PC-3 (cell line): ENCODE measurements at regions of chr4 and their contacts with region 1.

Region 1: GRCh38 chr4:140901736-140902336 is 145.7 kb upstream of the TBC1D9 start:
- DNase-seq: no peak
- ATAC-seq: no peak
- H3K4me3 ChIP-seq: no peak overlapping the region
- H3K27ac ChIP-seq: no peak overlapping the region
- H3K4me1 ChIP-seq: no peaks in the 10 kb centered on the region
- H3K27me3 ChIP-seq: peaks cover 52% of the 10 kb centered on the region
- CTCF ChIP-seq: no peak

Region 2: DNA sequence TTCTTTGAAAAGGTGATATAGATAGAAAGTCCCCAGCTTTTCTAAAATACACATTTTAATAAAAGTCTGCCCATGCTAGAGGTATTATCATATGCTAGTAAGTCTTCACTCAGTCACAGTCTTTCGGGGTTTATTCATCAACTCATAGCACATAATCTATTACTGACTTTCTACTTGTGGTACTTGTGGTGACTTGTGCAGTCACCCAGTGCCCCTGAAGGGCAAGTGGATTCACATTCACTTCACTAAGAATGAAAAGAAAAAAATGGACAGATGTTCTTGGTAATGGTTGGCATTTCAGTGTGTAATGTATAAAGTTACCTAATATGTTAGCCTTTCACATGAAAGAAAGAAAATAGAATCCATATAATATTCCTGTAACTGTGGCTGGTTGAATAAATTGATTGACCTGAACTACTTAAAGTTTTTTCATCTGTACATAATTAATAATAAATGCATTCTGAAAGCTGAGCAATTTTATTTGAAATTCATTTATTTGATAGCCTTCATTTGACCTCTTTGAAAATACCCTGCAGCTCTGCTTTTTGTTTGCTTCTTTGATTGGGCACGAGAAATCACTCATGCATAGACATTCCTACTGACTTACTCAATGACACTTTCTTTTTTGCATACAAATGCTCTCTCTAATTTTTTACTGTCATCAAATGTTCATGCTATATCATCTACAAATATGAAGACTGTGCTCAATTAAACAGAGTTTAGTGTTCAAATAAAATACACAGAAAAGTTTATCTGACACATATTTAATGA is 279.3 kb after region 1 on chr4:
- CTCF ChIA-PET with region 1: interaction called, 13 read pairs
- POLR2A ChIA-PET with region 1: no interaction called
- intact Hi-C with region 1: no loop called
- DNase-seq: no peak
- ATAC-seq: no peak
- H3K4me3 ChIP-seq: no peak overlapping the region
- H3K27ac ChIP-seq: no peak overlapping the region
- H3K4me1 ChIP-seq: no peaks in the 10 kb centered on the region
- H3K27me3 ChIP-seq: peaks cover 29% of the 10 kb centered on the region
- CTCF ChIP-seq: no peak

Region 3: GRCh38 chr4:141248029-141248428 is 346.2 kb after region 1 on chr4:
- CTCF ChIA-PET with region 1: no interaction called
- POLR2A ChIA-PET with region 1: no interaction called
- intact Hi-C with region 1: no loop called
- DNase-seq: no peak
- ATAC-seq: no peak
- H3K4me3 ChIP-seq: no peak overlapping the region
- H3K27ac ChIP-seq: no peak overlapping the region
- H3K4me1 ChIP-seq: no peaks in the 10 kb centered on the region
- H3K27me3 ChIP-seq: no peaks in the 10 kb centered on the region
- CTCF ChIP-seq: no peak